Right cardiac atrium (tissue), 5 donors: ENCODE measurements at regions of chr7 and their contacts with region 1.

Region 1: GRCh38 chr7:91034459-91035368 is 229.5 kb upstream of the FZD1 start:
- DNase-seq: peak in 2 of 3 donors; percentile 22 to 61
- ATAC-seq: peak; percentile 67 to 73
- H3K4me3 ChIP-seq: no peak overlapping the region
- H3K27ac ChIP-seq: no peak overlapping the region
- H3K4me1 ChIP-seq: no peaks in the 10 kb centered on the region
- H3K27me3 ChIP-seq: no peaks in the 10 kb centered on the region

Region 2: GRCh38 chr7:90552521-90552920 is 482.2 kb before region 1 on chr7:
- intact Hi-C with region 1: loop called (anchors 5 to 10 kb)
- DNase-seq: no peak
- ATAC-seq: no peak
- H3K4me3 ChIP-seq: no peak overlapping the region
- H3K27ac ChIP-seq: no peak overlapping the region
- H3K4me1 ChIP-seq: no peaks in the 10 kb centered on the region
- H3K27me3 ChIP-seq: no peaks in the 10 kb centered on the region

Region 3: GRCh38 chr7:90857603-90858002 is 177.1 kb before region 1 on chr7:
- intact Hi-C with region 1: loop called in 1 of 4 experiments (anchors 10 kb)
- DNase-seq: peak; percentile 21 to 56 (median 43)
- ATAC-seq: peak; percentile 87 to 94
- H3K4me3 ChIP-seq: no peak overlapping the region
- H3K27ac ChIP-seq: no peak overlapping the region
- H3K4me1 ChIP-seq: no peaks in the 10 kb centered on the region
- H3K27me3 ChIP-seq: no peaks in the 10 kb centered on the region

Region 4: DNA sequence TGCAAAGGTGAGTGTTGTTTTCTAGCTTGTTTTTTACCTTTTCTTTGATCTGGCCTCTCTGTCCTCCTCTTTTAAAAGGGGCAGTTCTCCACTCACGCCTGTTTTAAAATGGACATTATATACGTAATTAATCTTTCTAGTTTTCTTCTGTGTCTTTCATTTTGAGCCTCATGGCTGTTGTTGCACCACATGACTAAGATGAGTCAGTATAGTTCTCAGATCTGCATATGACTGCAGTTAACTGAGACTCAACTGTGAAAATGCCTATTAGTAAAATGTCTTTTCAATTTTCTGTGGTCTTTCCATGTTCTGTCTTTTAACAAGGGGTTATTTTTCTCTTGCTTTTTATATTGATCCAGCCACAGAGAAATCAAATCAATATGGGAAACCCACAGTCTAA is 142.5 kb before region 1 on chr7:
- intact Hi-C with region 1: no loop called
- DNase-seq: no peak
- ATAC-seq: no peak
- H3K4me3 ChIP-seq: no peak overlapping the region
- H3K27ac ChIP-seq: no peak overlapping the region
- H3K4me1 ChIP-seq: peaks cover 2% of the 10 kb centered on the region
- H3K27me3 ChIP-seq: no peaks in the 10 kb centered on the region

Region 5: GRCh38 chr7:90988516-90988915 is 46.2 kb before region 1 on chr7:
- intact Hi-C with region 1: no loop called
- DNase-seq: peak; percentile 14 to 51 (median 41)
- ATAC-seq: peak; percentile 43 to 45
- H3K4me3 ChIP-seq: no peak overlapping the region
- H3K27ac ChIP-seq: no peak overlapping the region
- H3K4me1 ChIP-seq: no peaks in the 10 kb centered on the region
- H3K27me3 ChIP-seq: no peaks in the 10 kb centered on the region

Region 6: DNA sequence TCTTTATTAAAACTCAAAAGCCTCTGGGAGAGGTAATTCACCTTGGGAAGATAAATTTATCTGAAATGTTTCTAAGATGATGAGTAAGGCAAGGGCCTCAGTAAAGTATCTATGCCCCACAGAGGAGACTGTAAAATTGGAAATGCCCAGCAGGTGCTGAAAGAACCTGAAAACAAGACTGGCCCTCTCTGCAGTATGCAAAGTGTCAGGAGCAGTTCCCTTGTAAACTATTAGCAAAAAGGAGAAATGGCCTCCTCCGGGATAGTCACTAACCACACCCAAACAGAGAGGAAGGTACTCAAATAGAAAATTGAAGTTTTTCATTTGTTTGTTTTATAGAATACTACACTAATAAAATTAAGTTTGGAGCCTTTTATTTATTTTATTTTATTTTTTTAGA is 310.7 kb after region 1 on chr7:
- intact Hi-C with region 1: no loop called
- DNase-seq: no peak
- ATAC-seq: no peak
- H3K4me3 ChIP-seq: no peak overlapping the region
- H3K27ac ChIP-seq: no peak overlapping the region
- H3K4me1 ChIP-seq: peaks cover 7% of the 10 kb centered on the region
- H3K27me3 ChIP-seq: no peaks in the 10 kb centered on the region